Caco-2 (cell line): ENCODE measurements at regions of chr20 and their contacts with region 1.

Region 1: GRCh38 chr20:35146920-35147574 is at the start of gene EDEM2:
- DNase-seq: peak; percentile 100
- H3K4me3 ChIP-seq: peak within 1 kb of the TSS; percentile 53
- H3K4me3 Mint-ChIP-seq: peak within 1 kb of the TSS; percentile 88
- H3K27ac Mint-ChIP-seq: peak within 1 kb of the TSS; percentile 96
- H3K4me1 ChIP-seq: peaks cover 20% of the 10 kb centered on the region
- H3K4me1 Mint-ChIP-seq: peaks cover 39% of the 10 kb centered on the region
- H3K27me3 ChIP-seq: no peaks in the 10 kb centered on the region
- H3K27me3 Mint-ChIP-seq: no peaks in the 10 kb centered on the region
- CTCF ChIP-seq: peak in 1 of 2 experiments; percentile 18
- total RNA-seq, gene EDEM2: 41.2 and 42.4 TPM in 2 replicates

Region 2: GRCh38 chr20:35092524-35093266 is 54.4 kb before region 1 on chr20 and contains the start of gene TRPC4AP:
- CTCF ChIA-PET with region 1: interaction called, 61 read pairs
- POLR2A ChIA-PET with region 1: interaction called, 4 read pairs
- intact Hi-C with region 1: loop called (anchors 1 kb)
- DNase-seq: peak; percentile 94 to 99
- H3K4me3 ChIP-seq: peak within 1 kb of the TSS; percentile 79
- H3K4me3 Mint-ChIP-seq: peak within 1 kb of the TSS; percentile 86
- H3K27ac Mint-ChIP-seq: peak within 1 kb of the TSS; percentile 95
- H3K4me1 ChIP-seq: peaks cover 16% of the 10 kb centered on the region
- H3K4me1 Mint-ChIP-seq: peaks cover 20% of the 10 kb centered on the region
- H3K27me3 ChIP-seq: no peaks in the 10 kb centered on the region
- H3K27me3 Mint-ChIP-seq: no peaks in the 10 kb centered on the region
- CTCF ChIP-seq: peak; percentile 99 to 100
- total RNA-seq, gene TRPC4AP: 144 and 146 TPM in 2 replicates

Region 3: DNA sequence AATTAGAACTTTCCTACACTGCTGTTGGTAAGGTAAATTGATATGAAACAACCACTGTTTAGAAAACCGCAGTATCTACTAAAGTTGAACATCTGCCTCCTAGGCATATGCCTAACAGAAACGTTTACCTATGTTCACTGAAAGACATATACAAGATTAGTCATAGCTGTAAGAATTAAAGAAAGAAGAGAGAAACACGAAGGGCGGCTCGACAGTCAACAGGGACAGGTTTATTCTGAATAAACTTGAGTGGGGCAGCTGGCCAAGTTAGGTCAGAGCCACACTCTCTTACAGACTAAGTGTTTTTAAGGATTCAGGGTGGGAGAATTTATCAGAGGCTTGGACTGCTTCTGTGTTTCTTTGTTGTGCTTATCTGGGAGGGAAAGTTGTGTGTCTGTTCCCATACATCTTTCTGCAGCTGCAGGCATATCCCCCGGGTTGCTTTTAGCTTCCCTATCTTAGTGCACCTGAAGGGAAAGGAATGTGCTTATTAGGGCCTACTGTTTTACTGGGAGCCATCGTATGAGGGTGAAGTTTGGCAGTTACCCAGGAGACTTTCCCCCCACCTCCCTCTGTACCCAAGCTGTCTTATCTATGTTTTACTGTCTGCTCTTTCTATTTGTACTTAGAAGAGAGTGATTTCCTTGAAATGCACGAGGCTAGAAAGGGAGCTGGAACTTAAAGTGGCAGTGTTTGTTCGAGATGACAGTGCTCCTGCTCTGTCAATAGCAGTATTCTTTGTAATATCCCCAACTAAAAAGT is 45.2 kb after region 1 on chr20:
- CTCF ChIA-PET with region 1: interaction called, 37 read pairs
- POLR2A ChIA-PET with region 1: interaction called, 4 read pairs
- intact Hi-C with region 1: loop called (anchors 1 kb)
- DNase-seq: peak; percentile 48 to 59
- H3K4me3 ChIP-seq: no peak overlapping the region
- H3K4me3 Mint-ChIP-seq: no peak overlapping the region
- H3K27ac Mint-ChIP-seq: peak overlapping the region; percentile 29
- H3K4me1 ChIP-seq: peaks cover 55% of the 10 kb centered on the region
- H3K4me1 Mint-ChIP-seq: peaks cover 46% of the 10 kb centered on the region
- H3K27me3 ChIP-seq: no peaks in the 10 kb centered on the region
- H3K27me3 Mint-ChIP-seq: no peaks in the 10 kb centered on the region
- CTCF ChIP-seq: no peak

Region 4: DNA sequence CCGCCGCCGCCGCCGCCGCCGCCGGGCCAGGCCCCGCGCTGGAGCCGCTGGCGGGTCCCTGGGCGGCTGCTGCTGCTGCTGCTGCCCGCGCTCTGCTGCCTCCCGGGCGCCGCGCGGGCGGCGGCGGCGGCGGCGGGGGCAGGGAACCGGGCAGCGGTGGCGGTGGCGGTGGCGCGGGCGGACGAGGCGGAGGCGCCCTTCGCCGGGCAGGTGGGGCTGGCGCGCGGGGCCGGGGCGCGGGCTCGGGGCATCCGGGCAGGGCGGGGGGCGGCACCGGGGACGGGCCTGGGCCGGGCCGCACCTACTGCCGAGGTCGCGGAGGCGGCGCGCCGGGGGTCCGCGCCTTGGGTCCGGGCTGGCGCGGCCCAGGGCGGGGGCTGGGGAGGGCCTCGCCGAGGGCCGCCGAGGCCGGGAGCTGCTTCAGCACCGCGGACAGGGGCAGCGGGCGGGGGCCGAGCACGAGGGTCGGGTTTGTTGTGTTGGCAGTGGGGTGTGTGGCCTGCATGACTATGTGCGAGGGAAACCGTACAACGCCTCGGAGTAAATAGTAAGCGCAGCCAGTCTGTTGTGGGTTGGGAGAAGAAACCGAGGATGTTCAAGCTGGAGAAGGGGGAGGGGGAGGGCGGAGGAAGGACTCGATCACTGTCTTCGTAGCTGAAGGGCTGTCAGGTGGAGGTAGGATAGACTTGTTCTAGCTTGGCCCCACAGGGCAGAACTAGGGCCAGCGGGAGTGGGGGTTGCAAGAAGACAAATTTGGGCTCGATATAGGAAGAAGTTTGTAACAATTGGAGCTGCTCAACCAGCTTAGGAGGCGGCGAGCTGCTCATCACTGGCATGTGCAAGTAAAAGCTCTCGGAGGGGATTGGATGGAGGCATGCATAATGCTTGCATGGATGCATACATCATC is 80.0 kb after region 1 on chr20:
- CTCF ChIA-PET with region 1: interaction called, 27 read pairs
- POLR2A ChIA-PET with region 1: no interaction called
- intact Hi-C with region 1: no loop called
- DNase-seq: peak; percentile 86 to 96
- H3K4me3 ChIP-seq: peak overlapping the region; percentile 45
- H3K4me3 Mint-ChIP-seq: peak overlapping the region; percentile 70
- H3K27ac Mint-ChIP-seq: no peak overlapping the region
- H3K4me1 ChIP-seq: peaks cover 12% of the 10 kb centered on the region
- H3K4me1 Mint-ChIP-seq: no peaks in the 10 kb centered on the region
- H3K27me3 ChIP-seq: peaks cover 4% of the 10 kb centered on the region; the same call in 1 of the 2 replicates
- H3K27me3 Mint-ChIP-seq: peaks cover 15% of the 10 kb centered on the region
- CTCF ChIP-seq: no peak

Region 5: DNA sequence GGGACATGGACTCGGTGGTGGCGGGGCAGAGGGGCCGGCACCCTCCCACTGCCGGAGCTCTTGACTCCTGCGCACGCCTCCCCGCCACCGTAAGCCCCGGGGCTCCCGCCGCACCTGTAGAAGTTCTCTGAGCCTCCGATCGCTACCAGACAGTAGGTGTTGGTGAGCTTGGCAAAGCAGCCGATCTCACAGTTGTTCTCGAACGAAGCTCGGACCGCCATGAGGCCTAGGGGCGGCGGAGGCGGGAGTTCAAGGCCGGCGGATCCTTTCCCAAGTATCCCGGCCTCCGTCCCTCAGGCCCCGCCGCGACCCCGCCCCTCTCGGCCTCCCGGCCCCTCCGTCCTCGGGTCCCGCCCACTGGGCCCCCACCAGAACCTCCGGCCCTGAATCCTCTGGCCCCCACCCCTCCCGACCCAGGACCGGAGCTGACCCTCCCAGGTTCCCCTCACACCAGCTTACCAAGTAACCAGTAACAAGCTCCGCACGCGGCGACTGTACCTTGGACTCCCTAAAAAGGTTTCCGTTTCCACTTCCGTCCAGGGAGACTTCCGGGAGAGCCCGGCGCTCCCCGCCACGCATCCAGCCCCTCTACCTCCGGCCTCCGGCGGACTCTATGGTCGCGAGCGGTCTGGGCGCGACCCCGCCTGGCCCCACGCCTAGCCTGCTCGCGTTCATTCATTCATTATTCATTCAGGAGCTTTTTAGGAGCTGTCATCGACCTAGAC is 137.4 kb after region 1 on chr20 and contains the start of gene EIF6:
- CTCF ChIA-PET with region 1: interaction called, 17 read pairs
- POLR2A ChIA-PET with region 1: interaction called, 14 read pairs
- intact Hi-C with region 1: no loop called
- DNase-seq: peak; percentile 97 to 98
- H3K4me3 ChIP-seq: peak within 1 kb of the TSS; percentile 95
- H3K4me3 Mint-ChIP-seq: peak within 1 kb of the TSS; percentile 84
- H3K27ac Mint-ChIP-seq: peak within 1 kb of the TSS; percentile 87
- H3K4me1 ChIP-seq: peaks cover 28% of the 10 kb centered on the region
- H3K4me1 Mint-ChIP-seq: peaks cover 18% of the 10 kb centered on the region
- H3K27me3 ChIP-seq: no peaks in the 10 kb centered on the region
- H3K27me3 Mint-ChIP-seq: no peaks in the 10 kb centered on the region
- CTCF ChIP-seq: no peak
- total RNA-seq, gene EIF6: 403 and 420 TPM in 2 replicates